ENCODE measurements at regions of chr6 and their contacts with region 1.

Region 1: DNA sequence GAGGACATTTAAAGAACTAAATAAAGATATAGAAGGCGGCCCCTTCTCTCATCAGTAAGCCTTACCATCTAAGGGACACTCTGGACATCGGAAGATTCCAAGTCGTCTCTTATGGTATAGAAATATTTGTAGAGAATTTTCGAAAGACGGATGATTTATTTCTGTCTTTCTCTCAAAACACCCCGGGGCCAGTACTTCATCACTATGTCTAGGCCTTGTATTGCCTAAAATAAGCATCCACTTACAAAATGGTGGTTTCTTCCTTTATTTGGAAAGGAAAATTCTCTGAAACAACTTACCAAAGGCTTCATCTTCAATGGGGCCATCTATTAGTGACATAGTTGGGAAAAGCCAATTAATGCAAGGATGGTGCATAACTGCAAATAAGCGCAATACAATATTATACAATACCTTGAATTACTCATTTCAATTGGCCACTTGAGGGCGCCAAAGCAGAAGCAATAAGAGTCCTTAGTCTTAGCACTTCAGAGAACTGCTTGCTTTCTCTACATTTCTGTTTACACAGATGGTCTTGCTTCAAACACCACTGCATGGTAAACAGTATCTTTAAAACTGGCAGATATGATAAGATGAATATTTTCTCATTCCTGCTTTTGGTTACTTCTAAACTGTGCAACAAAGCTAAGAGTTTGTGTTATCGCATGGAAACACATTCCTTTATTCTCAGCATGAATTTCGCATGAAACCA is 113.2 kb downstream of the VIP start:
- DNase-seq: peak; percentile 16
- H3K4me3 ChIP-seq: no peak overlapping the region
- H3K27ac ChIP-seq: no peak overlapping the region
- H3K4me1 ChIP-seq: no peaks in the 10 kb centered on the region
- H3K27me3 ChIP-seq: no peaks in the 10 kb centered on the region
- CTCF ChIP-seq: peak; percentile 75

Region 2: GRCh38 chr6:151512481-151512880 is 1351.3 kb before region 1 on chr6:
- intact Hi-C with region 1: no loop called
- DNase-seq: no peak
- H3K4me3 ChIP-seq: no peak overlapping the region
- H3K27ac ChIP-seq: no peak overlapping the region
- H3K4me1 ChIP-seq: no peaks in the 10 kb centered on the region
- H3K27me3 ChIP-seq: no peaks in the 10 kb centered on the region
- CTCF ChIP-seq: no peak

Region 3: GRCh38 chr6:152950240-152950639 is 86.5 kb after region 1 on chr6:
- intact Hi-C with region 1: loop called (anchors 2 kb)
- DNase-seq: no peak
- H3K4me3 ChIP-seq: no peak overlapping the region
- H3K27ac ChIP-seq: no peak overlapping the region
- H3K4me1 ChIP-seq: peaks cover 7% of the 10 kb centered on the region
- H3K27me3 ChIP-seq: peaks cover 31% of the 10 kb centered on the region
- CTCF ChIP-seq: no peak